ENCODE measurements at regions of chr1 and their contacts with region 1.

Region 1: DNA sequence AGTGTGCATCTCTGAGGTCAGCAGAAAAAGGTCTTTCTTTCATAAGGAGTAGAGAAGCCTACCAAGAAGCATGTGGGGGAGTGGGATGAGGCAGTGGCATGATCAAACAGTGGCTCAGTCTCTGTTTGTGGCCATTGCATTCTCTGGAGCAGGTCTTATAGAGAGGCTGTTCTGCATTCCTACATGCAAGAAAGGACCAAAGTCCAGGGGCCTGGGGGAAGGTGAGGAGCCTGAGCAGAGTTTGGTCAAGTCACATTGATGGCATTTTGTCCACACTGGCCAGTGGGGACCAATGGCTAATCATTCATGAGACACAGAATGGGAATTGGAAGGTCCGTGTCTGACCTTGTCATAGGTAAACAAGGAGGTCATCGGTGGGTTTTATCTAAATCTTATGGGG is 25.4 kb downstream of the MAP10 start:
- DNase-seq: peak; percentile 79 to 83
- H3K4me3 ChIP-seq: no peak overlapping the region
- H3K4me3 Mint-ChIP-seq: peak overlapping the region; percentile 15
- H3K27ac Mint-ChIP-seq: peak overlapping the region; percentile 67
- H3K4me1 ChIP-seq: peaks cover 18% of the 10 kb centered on the region
- H3K4me1 Mint-ChIP-seq: peaks cover 11% of the 10 kb centered on the region
- H3K27me3 ChIP-seq: no peaks in the 10 kb centered on the region
- H3K27me3 Mint-ChIP-seq: no peaks in the 10 kb centered on the region
- CTCF ChIP-seq: no peak

Region 2: GRCh38 chr1:232805269-232806185 is 25.1 kb before region 1 on chr1 and contains the start of gene MAP10:
- CTCF ChIA-PET with region 1: no interaction called
- POLR2A ChIA-PET with region 1: no interaction called
- intact Hi-C with region 1: loop called (anchors 2 kb)
- DNase-seq: no peak
- H3K4me3 ChIP-seq: no peak within 1 kb of the TSS
- H3K4me3 Mint-ChIP-seq: no peak within 1 kb of the TSS
- H3K27ac Mint-ChIP-seq: no peak within 1 kb of the TSS
- H3K4me1 ChIP-seq: peaks cover 10% of the 10 kb centered on the region
- H3K4me1 Mint-ChIP-seq: peaks cover 12% of the 10 kb centered on the region
- H3K27me3 ChIP-seq: no peaks in the 10 kb centered on the region
- H3K27me3 Mint-ChIP-seq: no peaks in the 10 kb centered on the region
- CTCF ChIP-seq: no peak
- total RNA-seq, gene MAP10: not detected in 2 replicates

Region 3: DNA sequence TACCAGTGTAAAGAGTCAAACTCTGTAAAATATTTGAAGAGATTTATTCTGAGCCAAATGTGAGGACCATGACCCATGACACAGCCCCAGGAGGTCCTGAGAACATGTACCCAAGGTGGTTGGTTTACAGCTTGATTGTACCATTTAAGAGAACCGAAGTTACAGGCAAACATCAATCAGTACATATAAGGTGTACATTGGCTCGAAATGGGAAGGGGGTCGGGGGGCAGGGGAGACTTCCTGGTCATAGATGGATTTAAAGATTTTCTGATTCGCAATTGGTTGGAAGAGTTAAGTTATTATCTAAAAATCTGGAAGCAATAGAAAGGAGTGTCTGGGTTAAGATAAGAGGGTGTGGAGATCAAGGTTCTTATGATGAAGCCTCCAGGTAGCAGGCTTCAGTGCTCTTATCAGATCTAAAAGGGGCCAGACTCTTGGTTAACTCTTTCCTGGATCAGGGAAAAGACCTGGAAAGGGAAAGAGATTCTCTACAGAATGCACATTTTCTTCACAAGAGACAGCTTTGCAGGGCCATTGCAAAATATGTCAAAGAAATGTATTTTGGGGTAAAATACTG is 72.2 kb after region 1 on chr1:
- CTCF ChIA-PET with region 1: no interaction called
- POLR2A ChIA-PET with region 1: no interaction called
- intact Hi-C with region 1: loop called (anchors 1 kb)
- DNase-seq: peak; percentile 26 to 43
- H3K4me3 ChIP-seq: no peak overlapping the region
- H3K4me3 Mint-ChIP-seq: peak overlapping the region; percentile 54
- H3K27ac Mint-ChIP-seq: no peak overlapping the region
- H3K4me1 ChIP-seq: peaks cover 52% of the 10 kb centered on the region
- H3K4me1 Mint-ChIP-seq: peaks cover 40% of the 10 kb centered on the region
- H3K27me3 ChIP-seq: no peaks in the 10 kb centered on the region
- H3K27me3 Mint-ChIP-seq: no peaks in the 10 kb centered on the region
- CTCF ChIP-seq: no peak

Measured in Caco-2 (cell line).